ENCODE measurements at regions of chr1 and their contacts with region 1.

Region 1: DNA sequence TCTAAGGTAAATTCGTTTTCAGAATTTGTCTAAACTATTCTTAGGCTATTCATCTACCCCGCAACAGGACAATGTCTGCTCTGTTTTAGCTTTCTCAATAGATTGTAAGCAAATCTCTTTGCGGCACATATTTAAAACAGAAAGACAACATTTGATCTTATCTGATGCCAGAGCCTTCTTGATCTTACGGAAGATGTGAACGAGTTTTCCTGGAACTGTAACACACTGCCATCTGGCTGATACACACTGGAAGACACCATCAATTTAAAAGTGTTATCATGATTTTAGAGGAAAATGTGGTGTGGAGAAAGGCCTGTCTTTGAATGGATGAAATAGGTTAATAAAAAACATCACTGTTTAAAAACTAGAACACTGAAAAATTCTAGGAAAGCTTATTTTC is 36.1 kb downstream of the COA6 start:
- DNase-seq: peak; percentile 19
- H3K4me3 Mint-ChIP-seq: peak overlapping the region; percentile 56
- H3K27ac Mint-ChIP-seq: peak overlapping the region; percentile 85
- H3K4me1 Mint-ChIP-seq: peaks cover 40% of the 10 kb centered on the region
- H3K27me3 Mint-ChIP-seq: no peaks in the 10 kb centered on the region

Region 2: DNA sequence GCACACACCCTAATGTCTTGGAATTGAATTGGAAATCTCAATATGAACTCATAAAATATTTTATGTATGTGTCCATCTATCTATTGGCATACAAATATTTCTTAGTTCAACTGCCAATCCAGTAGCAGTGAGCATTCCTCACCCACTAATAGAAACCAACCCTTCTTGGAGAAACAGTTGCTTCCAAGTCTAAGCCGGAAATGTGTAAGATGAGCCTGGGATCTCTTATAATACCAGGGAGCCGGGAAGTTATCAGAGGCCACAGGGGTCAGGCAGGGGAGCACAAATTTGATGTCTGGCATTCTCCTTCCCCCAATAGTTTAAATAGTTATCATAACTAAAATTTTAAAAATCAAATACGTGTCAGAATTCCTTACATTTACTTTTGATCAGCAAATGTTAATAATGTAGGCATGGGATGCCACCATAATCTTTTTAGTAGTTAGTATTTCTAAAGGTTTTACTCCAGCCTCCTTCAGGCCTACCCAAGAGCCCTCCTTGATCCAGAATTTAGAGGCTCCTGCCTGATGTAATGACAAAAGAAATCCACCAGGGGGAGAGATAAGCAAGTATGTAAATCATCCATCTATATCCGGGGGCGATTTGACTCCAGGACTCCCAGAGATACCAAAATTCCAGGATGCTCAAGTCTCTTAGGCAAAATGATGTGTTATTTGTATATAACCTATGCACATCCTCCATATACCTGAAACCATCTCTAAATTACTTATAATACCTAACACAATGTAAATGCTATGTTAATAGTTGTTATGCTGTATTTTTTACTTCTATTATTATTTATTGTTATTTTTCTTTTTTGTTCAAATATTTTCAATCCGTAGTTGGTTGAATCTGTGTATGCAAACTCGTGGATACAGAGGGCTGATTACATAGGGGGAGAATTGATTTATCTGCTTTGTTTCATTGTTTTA is 254.7 kb before region 1 on chr1:
- intact Hi-C with region 1: loop called (anchors 2 kb)
- DNase-seq: no peak
- H3K4me3 Mint-ChIP-seq: no peak overlapping the region
- H3K27ac Mint-ChIP-seq: no peak overlapping the region
- H3K4me1 Mint-ChIP-seq: no peaks in the 10 kb centered on the region
- H3K27me3 Mint-ChIP-seq: peaks cover 13% of the 10 kb centered on the region

Region 3: GRCh38 chr1:234326497-234327366 is 82.6 kb before region 1 on chr1:
- intact Hi-C with region 1: loop called (anchors 1 kb)
- DNase-seq: peak; percentile 53
- H3K4me3 Mint-ChIP-seq: peak overlapping the region; percentile 60
- H3K27ac Mint-ChIP-seq: peak overlapping the region; percentile 33
- H3K4me1 Mint-ChIP-seq: peaks cover 34% of the 10 kb centered on the region
- H3K27me3 Mint-ChIP-seq: peaks cover 25% of the 10 kb centered on the region

Region 4: GRCh38 chr1:234355782-234356510 is 53.4 kb before region 1 on chr1:
- intact Hi-C with region 1: loop called (anchors 5 kb)
- DNase-seq: no peak
- H3K4me3 Mint-ChIP-seq: peak overlapping the region; percentile 90
- H3K27ac Mint-ChIP-seq: peak overlapping the region; percentile 30
- H3K4me1 Mint-ChIP-seq: peaks cover 21% of the 10 kb centered on the region
- H3K27me3 Mint-ChIP-seq: peaks cover 15% of the 10 kb centered on the region

Region 5: GRCh38 chr1:234478481-234479309 is 69.4 kb after region 1 on chr1 and contains the start of gene TARBP1:
- intact Hi-C with region 1: loop called (anchors 2 kb)
- DNase-seq: peak; percentile 76
- H3K4me3 Mint-ChIP-seq: peak within 1 kb of the TSS; percentile 90
- H3K27ac Mint-ChIP-seq: peak within 1 kb of the TSS; percentile 75
- H3K4me1 Mint-ChIP-seq: peaks cover 47% of the 10 kb centered on the region
- H3K27me3 Mint-ChIP-seq: peaks cover 17% of the 10 kb centered on the region
- total RNA-seq, gene TARBP1: 71.7 and 78.9 TPM in 2 replicates